ENCODE measurements at regions of chr7 and their contacts with region 1.

Region 1: GRCh38 chr7:155763691-155764437 is 48.4 kb downstream of the SHH start:
- DNase-seq: peak; percentile 64
- H3K4me3 Mint-ChIP-seq: peak overlapping the region; percentile 85
- H3K27ac Mint-ChIP-seq: peak overlapping the region; percentile 100
- H3K4me1 Mint-ChIP-seq: peaks cover 68% of the 10 kb centered on the region
- H3K27me3 Mint-ChIP-seq: no peaks in the 10 kb centered on the region

Region 2: GRCh38 chr7:155584763-155585531 is 178.9 kb before region 1 on chr7:
- intact Hi-C with region 1: loop called (anchors 1 kb)
- DNase-seq: no peak
- H3K4me3 Mint-ChIP-seq: no peak overlapping the region
- H3K27ac Mint-ChIP-seq: no peak overlapping the region
- H3K4me1 Mint-ChIP-seq: peaks cover 9% of the 10 kb centered on the region
- H3K27me3 Mint-ChIP-seq: peaks cover 37% of the 10 kb centered on the region

Region 3: DNA sequence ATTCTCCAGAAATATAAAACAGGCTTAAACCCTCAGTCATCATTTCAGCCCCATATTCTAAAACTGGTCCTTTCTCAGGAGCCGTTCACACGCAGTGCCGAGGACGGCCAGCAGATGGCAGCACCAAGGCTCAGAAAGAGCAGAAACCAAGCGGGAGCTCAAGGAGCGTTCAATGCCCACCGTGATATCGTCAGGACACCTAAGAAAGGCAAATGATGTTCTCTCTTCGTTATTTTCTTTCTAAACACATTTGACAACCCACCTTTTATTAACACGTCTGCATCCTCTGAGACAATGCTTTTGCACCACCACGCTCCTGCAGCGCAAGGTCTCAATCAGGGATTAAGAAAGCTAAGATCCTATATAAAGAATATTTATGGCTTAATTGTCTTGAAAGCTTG is 165.1 kb before region 1 on chr7:
- intact Hi-C with region 1: loop called (anchors 1 kb)
- DNase-seq: peak; percentile 72
- H3K4me3 Mint-ChIP-seq: no peak overlapping the region
- H3K27ac Mint-ChIP-seq: no peak overlapping the region
- H3K4me1 Mint-ChIP-seq: peaks cover 10% of the 10 kb centered on the region
- H3K27me3 Mint-ChIP-seq: peaks cover 32% of the 10 kb centered on the region

Region 4: GRCh38 chr7:155644178-155644970 is 119.5 kb before region 1 on chr7 and contains the start of gene RBM33:
- intact Hi-C with region 1: loop called (anchors 5 kb)
- DNase-seq: peak; percentile 79
- H3K4me3 Mint-ChIP-seq: peak within 1 kb of the TSS; percentile 99
- H3K27ac Mint-ChIP-seq: peak within 1 kb of the TSS; percentile 100
- H3K4me1 Mint-ChIP-seq: peaks cover 26% of the 10 kb centered on the region
- H3K27me3 Mint-ChIP-seq: no peaks in the 10 kb centered on the region
- total RNA-seq, gene RBM33: 79.8 and 80.3 TPM in 2 replicates

Region 5: GRCh38 chr7:155738652-155739537 is 25.0 kb before region 1 on chr7:
- intact Hi-C with region 1: loop called (anchors 1 kb)
- DNase-seq: peak; percentile 46
- H3K4me3 Mint-ChIP-seq: peak overlapping the region; percentile 51
- H3K27ac Mint-ChIP-seq: peak overlapping the region; percentile 78
- H3K4me1 Mint-ChIP-seq: peaks cover 74% of the 10 kb centered on the region
- H3K27me3 Mint-ChIP-seq: no peaks in the 10 kb centered on the region

Region 6: GRCh38 chr7:155746188-155746587 is 17.7 kb before region 1 on chr7:
- intact Hi-C with region 1: loop called (anchors 1 kb)
- DNase-seq: no peak
- H3K4me3 Mint-ChIP-seq: peak overlapping the region; percentile 45
- H3K27ac Mint-ChIP-seq: peak overlapping the region; percentile 82
- H3K4me1 Mint-ChIP-seq: peaks cover 61% of the 10 kb centered on the region
- H3K27me3 Mint-ChIP-seq: no peaks in the 10 kb centered on the region

Region 7: DNA sequence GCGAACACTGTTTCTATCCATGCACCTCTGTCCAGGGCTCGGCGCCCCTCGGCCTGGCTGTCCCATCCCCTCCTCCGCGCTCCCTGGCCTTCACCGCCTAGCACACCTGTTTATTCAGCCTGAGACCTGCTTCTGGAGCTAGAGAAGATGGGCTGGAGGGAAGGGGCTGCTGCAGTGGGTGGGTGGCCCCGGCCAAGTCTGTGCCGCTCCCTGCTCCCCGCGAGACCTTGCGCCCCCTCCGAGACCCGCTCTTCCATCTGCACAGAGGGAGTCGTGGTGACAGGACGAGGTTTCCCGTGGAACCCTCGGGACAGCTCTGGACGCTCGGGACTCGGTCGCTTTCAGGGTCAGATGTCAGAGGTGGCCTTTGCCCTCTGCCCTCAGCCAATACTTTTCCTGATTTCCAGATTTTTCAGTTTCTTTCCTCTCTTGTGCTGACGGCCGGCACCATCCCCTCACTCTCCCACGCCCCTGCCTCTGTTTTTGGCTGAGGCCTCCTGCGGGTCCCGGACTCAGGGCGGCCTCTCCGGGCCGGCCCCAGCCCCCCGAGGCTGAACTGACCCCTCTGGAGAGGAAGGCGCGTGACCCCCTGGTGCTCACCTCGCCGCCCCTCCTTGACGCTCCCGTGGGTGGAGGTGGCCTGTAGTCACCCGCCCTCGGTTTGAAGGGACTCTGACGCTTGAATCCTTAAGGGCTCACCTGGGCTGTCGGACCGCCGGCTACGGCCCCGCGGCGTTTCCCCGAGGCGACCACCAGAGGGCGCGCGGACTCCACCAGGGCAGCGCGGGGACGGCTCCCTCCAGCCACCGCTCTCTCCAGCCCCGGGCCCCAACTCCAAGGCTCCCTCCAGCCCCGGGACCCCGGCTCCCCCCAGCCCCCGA is 32.8 kb after region 1 on chr7:
- intact Hi-C with region 1: no loop called
- DNase-seq: peak; percentile 54
- H3K4me3 Mint-ChIP-seq: no peak overlapping the region
- H3K27ac Mint-ChIP-seq: no peak overlapping the region
- H3K4me1 Mint-ChIP-seq: peaks cover 5% of the 10 kb centered on the region
- H3K27me3 Mint-ChIP-seq: peaks cover 35% of the 10 kb centered on the region

Measured in activated T-helper 2 cell treated with anti-CD3 and anti-CD28 coated beads, Interferon-gamma antibody, Interleukin-2, Interleukin-4, amounts not matched to agents 10 μg/mL and 5 μg/mL and 100 μg/mL, durations not matched to agents 14 hours and 24 hours and 36 hours (primary cell).